RWPE1 (cell line): ENCODE measurements at regions of chr3 and their contacts with region 1.

Region 1: DNA sequence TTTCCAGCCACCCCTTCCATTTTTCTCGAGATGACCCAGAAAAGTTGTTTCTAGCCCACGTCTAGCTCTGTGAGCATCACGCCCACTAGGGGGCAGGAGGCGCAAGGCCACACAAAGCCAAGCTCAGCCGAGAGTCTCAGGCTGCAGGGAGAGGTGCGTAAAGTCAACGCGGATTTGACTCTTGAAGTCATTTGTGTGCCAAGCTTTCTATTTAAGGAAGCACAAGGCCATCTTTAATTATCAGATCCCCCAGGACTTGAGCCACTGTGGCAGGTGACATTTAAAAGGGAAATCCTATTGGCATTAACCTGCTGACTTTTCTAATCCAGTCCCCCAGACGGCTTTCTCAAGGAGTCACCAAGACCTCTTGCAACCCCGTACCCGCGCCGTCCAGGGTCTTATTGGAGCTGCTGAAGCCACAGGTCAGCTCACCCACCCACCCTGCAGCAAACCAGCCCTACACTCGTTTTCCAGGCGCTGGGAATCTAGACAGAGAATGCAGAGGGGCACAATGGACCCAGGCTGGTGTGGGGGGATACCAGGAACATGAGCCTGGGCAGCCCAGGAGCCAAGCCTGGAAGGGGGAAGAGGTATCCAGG is 62.1 kb downstream of the CAPN7 start:
- DNase-seq: peak; percentile 62
- H3K27ac ChIP-seq: peak overlapping the region; percentile 31
- CTCF ChIP-seq: peak; percentile 91

Region 2: GRCh38 chr3:15228147-15228546 is 40.0 kb before region 1 on chr3:
- CTCF ChIA-PET with region 1: no interaction called
- POLR2A ChIA-PET with region 1: no interaction called
- DNase-seq: no peak
- H3K27ac ChIP-seq: no peak overlapping the region
- CTCF ChIP-seq: no peak

Region 3: GRCh38 chr3:15256861-15257341 is 11.2 kb before region 1 on chr3:
- CTCF ChIA-PET with region 1: no interaction called
- POLR2A ChIA-PET with region 1: no interaction called
- DNase-seq: no peak
- H3K27ac ChIP-seq: peak overlapping the region; percentile 18; the same call in 1 of the 2 replicates
- CTCF ChIP-seq: no peak

Region 4: DNA sequence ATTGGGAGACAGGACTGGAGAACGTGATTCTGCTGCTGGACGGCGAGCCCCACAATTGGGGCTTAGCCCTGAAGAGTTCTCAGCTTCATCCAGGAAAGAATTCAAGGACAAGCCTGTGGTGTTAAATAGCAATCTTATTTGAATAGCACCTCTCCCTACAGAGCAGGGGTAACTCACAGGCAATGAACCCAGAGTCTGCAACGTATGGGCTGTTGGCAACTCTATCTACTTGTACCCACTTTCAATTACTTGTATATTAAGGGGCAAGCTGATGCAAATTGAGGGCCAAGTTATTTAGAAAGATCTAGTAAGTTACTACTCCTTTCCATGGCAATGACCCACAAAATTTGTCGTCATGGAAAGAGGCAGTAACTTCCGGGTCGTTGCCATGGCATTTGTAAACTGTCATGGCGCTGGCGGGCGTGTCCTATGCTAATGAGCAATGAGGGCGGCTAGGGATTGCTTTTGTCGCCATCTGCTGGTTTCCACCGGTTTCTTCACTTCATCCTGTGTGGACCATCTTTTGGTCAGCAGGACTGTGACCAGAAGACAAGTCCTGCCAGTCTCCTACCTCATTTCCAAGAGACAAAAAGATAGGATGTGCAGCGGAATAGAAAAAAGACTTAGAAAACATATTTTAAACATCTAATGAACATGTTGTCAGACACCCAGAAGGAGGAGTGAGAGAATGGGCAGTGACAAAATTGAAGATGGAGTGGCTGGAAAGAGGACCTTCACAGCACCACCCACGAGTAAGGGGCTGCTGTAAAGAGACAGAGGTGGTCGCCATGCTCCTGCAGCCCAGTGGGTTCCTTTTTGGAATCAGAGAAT is 110.0 kb after region 1 on chr3:
- CTCF ChIA-PET with region 1: interaction called, 10 read pairs
- POLR2A ChIA-PET with region 1: no interaction called
- DNase-seq: peak; percentile 56
- H3K27ac ChIP-seq: no peak overlapping the region
- CTCF ChIP-seq: peak; percentile 81